ENCODE measurements at regions of chr1 and their contacts with region 1.

Region 1: GRCh38 chr1:7704214-7705047 is 66.7 kb upstream of the VAMP3 start:
- H3K4me3 ChIP-seq: peak overlapping the region; percentile 78
- H3K27ac ChIP-seq: peak overlapping the region; percentile 46; the same call in 1 of the 2 replicates
- H3K4me1 ChIP-seq: no peaks in the 10 kb centered on the region
- CTCF ChIP-seq: no peak

Region 2: GRCh38 chr1:7680207-7680954 is 24.1 kb before region 1 on chr1:
- CTCF ChIA-PET with region 1: no interaction called
- POLR2A ChIA-PET with region 1: interaction called, 25 read pairs
- H3K4me3 ChIP-seq: peak overlapping the region; percentile 54
- H3K27ac ChIP-seq: peak overlapping the region; percentile 61; the same call in 1 of the 2 replicates
- H3K4me1 ChIP-seq: no peaks in the 10 kb centered on the region
- CTCF ChIP-seq: no peak

Region 3: GRCh38 chr1:7777591-7777990 is 73.2 kb after region 1 on chr1:
- CTCF ChIA-PET with region 1: no interaction called
- POLR2A ChIA-PET with region 1: no interaction called
- H3K4me3 ChIP-seq: no peak overlapping the region
- H3K27ac ChIP-seq: no peak overlapping the region
- H3K4me1 ChIP-seq: no peaks in the 10 kb centered on the region
- CTCF ChIP-seq: no peak

Measured in HEK293 (cell line).